Activated B cell treated with CpG ODN at 0.5 μM for 24 hours (primary cell): ENCODE measurements at regions of chr17 and their contacts with region 1.

Region 1: DNA sequence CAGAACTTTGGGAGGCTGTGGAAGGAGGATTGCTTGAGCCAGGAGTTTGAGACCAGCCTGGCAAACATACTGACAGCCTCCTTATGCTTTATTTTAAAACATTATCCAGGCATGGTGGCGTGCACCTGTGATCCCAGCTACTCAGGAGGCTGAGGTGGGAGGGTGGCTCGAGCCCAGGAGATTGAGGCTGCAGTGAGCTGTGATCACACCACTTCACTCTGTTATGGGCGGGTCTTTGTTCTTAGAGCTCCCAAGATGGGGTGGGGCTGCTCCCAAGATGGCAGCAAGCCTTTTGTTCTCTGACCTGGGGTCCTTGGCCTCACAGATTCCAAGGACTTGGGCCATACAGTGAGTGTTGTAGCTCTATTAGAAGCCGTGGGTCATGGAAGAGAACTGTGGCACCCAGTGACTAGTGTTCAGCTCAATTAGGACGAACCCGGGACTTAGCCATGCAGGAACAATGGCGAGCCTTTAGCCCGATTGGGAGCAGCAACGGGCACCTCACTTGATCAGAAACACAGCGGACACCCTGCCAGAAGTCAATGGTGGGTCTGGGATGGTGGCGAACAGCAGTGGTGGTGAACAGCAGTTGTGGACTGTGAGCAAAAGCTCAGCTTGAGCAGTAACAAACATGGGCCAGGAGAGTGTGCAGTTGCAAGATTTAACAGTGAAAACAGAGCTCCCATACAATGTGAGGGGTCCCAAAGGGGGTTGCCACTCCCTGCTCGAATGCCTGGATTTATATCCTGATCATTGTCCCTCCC is 26.3 kb upstream of the ST6GALNAC2 start:
- DNase-seq: no peak
- ATAC-seq: no peak
- H3K4me3 Mint-ChIP-seq: no peak overlapping the region
- H3K27ac Mint-ChIP-seq: no peak overlapping the region
- H3K4me1 Mint-ChIP-seq: peaks cover 4% of the 10 kb centered on the region
- H3K27me3 Mint-ChIP-seq: peaks cover 8% of the 10 kb centered on the region
- CTCF ChIP-seq: no peak

Region 2: DNA sequence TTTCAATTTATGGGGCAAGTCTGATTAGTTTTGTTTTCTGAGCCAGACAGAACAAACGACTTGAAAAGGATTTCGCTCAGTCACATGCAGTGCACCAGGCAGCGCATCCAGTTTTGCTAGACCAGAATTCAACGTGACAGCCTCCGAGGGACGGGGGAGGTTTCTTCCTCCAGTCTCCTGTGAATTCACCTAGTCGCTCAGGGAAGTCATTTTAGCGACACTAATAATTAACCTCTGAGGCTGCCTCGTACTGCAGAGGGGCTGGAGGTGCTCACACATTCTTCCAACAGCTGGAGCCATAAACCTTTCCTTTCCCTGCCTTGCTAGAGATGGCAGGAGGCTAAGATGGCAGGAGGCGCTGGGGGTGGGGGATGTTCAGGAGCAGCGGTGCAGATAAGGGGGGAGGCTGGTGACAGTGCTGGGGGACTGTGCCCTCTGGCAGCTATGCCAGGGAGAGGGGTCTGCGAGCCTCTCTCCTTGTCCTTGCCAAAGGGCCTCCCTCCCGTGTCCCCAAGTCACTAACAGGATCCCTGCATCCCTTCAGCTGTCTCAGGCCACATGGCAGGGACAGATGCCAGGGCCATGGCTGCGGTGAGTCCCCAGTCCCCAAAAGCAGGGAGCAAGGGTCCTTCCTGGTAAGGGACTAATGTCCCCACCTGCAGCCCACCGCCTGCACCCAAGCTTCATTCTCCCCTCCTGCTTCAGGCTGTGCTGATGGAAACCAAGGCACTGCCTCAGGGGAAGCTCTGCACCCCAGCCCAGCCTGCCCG is 74.8 kb after region 1 on chr17:
- CTCF ChIA-PET with region 1: no interaction called
- POLR2A ChIA-PET with region 1: no interaction called
- intact Hi-C with region 1: no loop called
- DNase-seq: no peak
- ATAC-seq: no peak
- H3K4me3 Mint-ChIP-seq: no peak overlapping the region
- H3K27ac Mint-ChIP-seq: no peak overlapping the region
- H3K4me1 Mint-ChIP-seq: no peaks in the 10 kb centered on the region
- H3K27me3 Mint-ChIP-seq: no peaks in the 10 kb centered on the region
- CTCF ChIP-seq: no peak

Region 3: DNA sequence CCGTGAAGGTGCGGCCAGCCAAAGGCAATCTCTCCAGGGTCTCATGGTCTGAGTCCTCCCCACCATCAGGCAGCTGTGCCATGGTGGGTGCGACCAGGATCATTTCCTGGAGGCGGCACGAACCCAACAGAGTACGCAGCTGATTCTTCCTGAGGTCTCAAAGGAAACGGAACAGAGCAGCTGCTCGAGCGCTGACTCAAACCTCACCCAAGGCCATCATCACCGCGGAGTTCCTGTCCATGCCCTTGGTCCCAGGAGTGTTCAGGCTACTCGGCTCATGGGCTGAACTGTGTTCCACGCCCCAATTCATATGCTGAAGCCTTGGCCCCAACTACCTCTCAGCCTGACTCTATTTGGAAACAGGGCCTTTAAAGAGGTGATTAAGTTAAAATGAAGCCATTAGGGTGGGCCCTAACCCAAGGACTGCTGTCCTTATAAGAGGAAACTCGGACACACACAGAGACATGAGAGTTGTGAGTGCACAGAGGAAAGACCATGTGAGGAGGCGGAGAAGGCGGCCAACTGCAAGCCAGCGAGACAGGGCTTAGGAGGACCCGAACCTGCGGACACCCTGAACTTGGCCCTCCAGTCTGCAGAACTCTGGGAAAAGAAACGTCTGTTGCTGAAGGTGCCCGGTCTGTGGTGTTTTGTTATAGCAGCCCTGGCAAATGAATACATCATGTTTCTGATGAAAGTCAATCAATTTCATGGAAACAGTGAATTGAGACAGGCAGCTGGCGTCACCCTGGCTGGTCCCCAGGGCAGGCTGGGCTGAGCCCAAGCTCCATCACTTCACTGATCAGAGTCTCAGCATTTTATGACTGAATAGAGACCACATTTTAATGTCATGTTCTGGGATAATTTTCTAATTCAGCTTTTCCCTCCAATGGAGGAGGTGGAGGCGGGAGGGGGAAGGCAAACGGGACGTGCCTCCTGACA is 85.1 kb after region 1 on chr17:
- CTCF ChIA-PET with region 1: no interaction called
- POLR2A ChIA-PET with region 1: interaction called, 12 read pairs
- intact Hi-C with region 1: no loop called
- DNase-seq: peak; percentile 27
- ATAC-seq: peak; percentile 94
- H3K4me3 Mint-ChIP-seq: no peak overlapping the region
- H3K27ac Mint-ChIP-seq: peak overlapping the region; percentile 53
- H3K4me1 Mint-ChIP-seq: peaks cover 21% of the 10 kb centered on the region
- H3K27me3 Mint-ChIP-seq: no peaks in the 10 kb centered on the region
- CTCF ChIP-seq: no peak